ENCODE measurements at regions of chr15 and their contacts with region 1.

Region 1: GRCh38 chr15:65032801-65033537 is 3.5 kb upstream of the MTFMT start:
- DNase-seq: peak; percentile 72 to 87
- ATAC-seq: peak; percentile 85
- H3K4me3 ChIP-seq: no peak overlapping the region
- H3K27ac ChIP-seq: no peak overlapping the region
- H3K4me1 ChIP-seq: no peaks in the 10 kb centered on the region
- H3K27me3 ChIP-seq: no peaks in the 10 kb centered on the region

Region 2: GRCh38 chr15:65275728-65276126 is 242.8 kb after region 1 on chr15:
- intact Hi-C with region 1: loop called (anchors 5 to 10 kb)
- DNase-seq: no peak
- ATAC-seq: no peak
- H3K4me3 ChIP-seq: no peak overlapping the region
- H3K27ac ChIP-seq: no peak overlapping the region
- H3K4me1 ChIP-seq: no peaks in the 10 kb centered on the region
- H3K27me3 ChIP-seq: no peaks in the 10 kb centered on the region